Sciatic nerve (tissue), 2 donors: ENCODE measurements at regions of chr10 and their contacts with region 1.

Region 1: DNA sequence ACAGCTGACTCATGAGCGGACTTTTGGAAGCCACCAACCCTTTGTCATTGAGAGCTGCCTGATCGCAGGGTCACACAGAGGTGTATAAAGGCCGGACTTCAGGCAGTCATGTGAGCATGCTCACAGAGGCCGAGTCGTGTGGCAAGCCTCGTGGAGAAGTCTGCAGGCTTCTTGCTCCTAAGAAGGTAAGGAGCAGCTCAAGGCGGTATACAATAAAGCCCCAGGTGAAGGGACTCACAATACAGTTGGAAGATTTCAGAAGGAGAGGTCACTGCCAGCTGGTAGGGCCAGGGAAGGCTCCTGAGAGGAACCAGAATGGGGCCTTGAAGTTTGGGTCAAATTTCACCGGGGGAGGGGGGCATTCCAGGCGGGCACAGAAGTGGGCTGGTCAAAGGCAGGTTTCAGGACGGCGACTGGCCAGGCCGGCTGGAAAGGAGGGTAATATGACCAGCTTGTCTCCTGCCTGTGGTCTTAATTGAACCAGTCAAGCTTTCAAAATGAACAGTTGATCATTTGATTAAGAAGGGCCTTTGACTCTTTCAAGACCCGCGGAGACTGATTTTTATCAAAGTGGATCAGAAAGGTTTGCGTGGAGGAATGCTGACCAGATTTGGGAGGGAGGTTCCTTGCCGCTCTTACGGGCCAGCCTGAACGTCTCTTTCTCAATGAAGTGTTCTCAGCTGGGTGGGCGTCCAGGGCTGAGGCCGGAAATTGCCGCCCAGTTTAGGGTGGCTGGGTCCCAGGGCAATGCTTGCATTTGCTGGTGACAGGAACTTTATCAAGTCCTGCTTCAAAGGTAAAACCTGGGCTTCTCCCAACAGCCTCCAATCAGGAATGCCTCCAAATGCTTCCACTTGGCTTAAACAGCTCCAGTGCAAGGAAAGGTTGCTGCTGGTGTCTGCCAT is 178.6 kb downstream of the EMX2 start:
- DNase-seq: no peak
- ATAC-seq: no peak

Region 2: GRCh38 chr10:115818012-115818411 is 1903.2 kb before region 1 on chr10:
- intact Hi-C with region 1: loop called (anchors 5 kb)
- DNase-seq: no peak
- ATAC-seq: no peak